PC-9 (cell line): ENCODE measurements at regions of chr17 and their contacts with region 1.

Region 1: GRCh38 chr17:68759343-68760132 is 158.4 kb upstream of the FAM20A start:
- DNase-seq: peak; percentile 78 to 80
- H3K4me3 ChIP-seq: peak overlapping the region; percentile 62
- H3K27ac ChIP-seq: peak overlapping the region; percentile 94
- H3K4me1 ChIP-seq: peaks cover 13% of the 10 kb centered on the region
- H3K27me3 ChIP-seq: no peaks in the 10 kb centered on the region
- CTCF ChIP-seq: peak; percentile 91

Region 2: GRCh38 chr17:68172461-68172954 is 587.0 kb before region 1 on chr17:
- CTCF ChIA-PET with region 1: interaction called, 5 read pairs
- POLR2A ChIA-PET with region 1: no interaction called
- intact Hi-C with region 1: loop called (anchors 2 kb)
- DNase-seq: peak; percentile 40 to 61
- H3K4me3 ChIP-seq: no peak overlapping the region
- H3K27ac ChIP-seq: no peak overlapping the region
- H3K4me1 ChIP-seq: no peaks in the 10 kb centered on the region
- H3K27me3 ChIP-seq: no peaks in the 10 kb centered on the region
- CTCF ChIP-seq: peak; percentile 98

Region 3: GRCh38 chr17:68196944-68197595 is 562.5 kb before region 1 on chr17:
- CTCF ChIA-PET with region 1: no interaction called
- POLR2A ChIA-PET with region 1: no interaction called
- intact Hi-C with region 1: loop called (anchors 10 kb)
- DNase-seq: peak in 1 of 2 experiments; percentile 33
- H3K4me3 ChIP-seq: peak overlapping the region; percentile 52
- H3K27ac ChIP-seq: no peak overlapping the region
- H3K4me1 ChIP-seq: peaks cover 14% of the 10 kb centered on the region; the same call in 1 of the 2 replicates
- H3K27me3 ChIP-seq: peaks cover 18% of the 10 kb centered on the region
- CTCF ChIP-seq: no peak

Region 4: DNA sequence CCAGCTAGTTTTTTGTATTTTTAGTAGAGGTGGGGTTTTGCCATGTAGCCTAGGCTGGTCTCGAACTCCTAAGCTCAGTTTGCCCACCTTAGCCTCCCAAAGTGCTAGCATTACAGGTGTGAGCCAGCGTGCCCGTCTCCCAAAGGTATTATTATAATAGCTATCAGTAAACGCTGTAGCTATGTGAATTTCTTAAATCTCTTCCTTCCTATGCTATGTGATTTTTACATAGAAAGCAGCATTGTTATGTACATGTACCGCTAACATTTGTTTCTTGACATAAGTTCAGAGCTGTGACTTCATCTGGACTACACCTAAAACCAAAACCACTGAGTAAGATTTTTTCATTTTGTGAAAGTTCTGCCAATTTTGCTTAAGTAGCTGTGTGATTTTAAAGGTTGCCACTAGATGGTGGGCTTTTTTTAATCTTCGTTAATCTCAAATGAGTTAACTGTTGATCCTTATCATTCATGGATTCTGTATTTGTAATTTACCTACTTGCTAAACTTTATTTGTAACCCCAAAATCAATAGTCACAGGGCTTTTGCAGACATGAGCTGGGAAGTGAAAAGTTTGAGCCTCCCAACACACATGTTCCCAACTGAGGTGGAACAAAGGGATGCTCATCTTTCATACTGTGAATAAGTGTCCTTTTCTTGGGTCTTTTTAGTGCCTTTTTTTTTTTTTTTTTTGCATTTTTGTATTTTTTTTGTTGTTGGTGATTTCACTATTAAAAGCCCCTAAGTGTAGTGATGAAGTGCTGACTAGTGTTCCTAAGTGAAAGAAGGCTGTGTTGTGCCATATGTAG is 225.4 kb before region 1 on chr17:
- CTCF ChIA-PET with region 1: interaction called, 3 read pairs
- POLR2A ChIA-PET with region 1: no interaction called
- intact Hi-C with region 1: loop called (anchors 5 kb)
- DNase-seq: no peak
- H3K4me3 ChIP-seq: no peak overlapping the region
- H3K27ac ChIP-seq: no peak overlapping the region
- H3K4me1 ChIP-seq: no peaks in the 10 kb centered on the region
- H3K27me3 ChIP-seq: no peaks in the 10 kb centered on the region
- CTCF ChIP-seq: peak; percentile 58